GM18951 (cell line): ENCODE measurements at regions of chr11 and their contacts with region 1.

Region 1: DNA sequence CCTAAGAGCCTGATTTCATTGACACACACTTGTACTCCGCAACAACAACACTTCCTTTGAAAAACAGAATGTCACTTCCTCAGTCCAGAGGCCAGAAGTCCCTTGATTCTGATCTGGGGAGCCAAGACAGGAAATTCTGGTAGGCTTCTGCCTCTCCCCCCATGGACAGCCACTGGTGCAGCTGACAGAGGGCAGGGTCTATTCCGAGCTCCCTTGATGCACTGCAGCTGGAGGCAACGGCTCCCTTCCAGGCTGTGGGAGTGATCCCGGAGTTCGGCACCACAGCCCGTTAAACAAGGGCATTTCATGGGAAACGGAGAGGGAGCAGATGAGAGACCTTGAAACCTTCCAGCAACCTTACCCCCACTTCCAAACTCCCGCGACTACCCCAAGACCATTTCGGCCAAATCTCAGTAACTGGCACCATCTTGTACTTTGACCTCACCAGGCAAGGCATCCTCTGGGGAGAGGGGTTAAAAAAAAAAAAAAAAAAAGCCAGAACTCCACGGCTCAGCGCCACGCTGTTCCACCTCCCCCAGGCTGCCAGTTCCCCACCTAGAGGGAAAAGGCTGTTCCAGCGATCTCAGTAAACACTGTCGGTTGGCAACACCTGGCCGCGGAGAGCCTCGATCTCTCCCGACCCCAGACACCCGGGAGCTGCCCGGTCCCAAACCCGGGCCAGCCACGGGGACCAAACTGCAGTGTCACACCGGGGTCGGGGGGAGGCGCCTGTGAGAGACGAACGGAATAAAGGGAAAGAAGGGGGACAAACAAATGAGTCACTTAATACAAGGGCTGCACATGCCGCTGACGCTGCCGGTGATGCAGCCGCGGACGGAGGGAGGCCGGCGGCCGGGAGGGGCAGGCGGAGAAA is 1.1 kb downstream of the GAB2 start:
- POLR2A ChIP-seq: no peak

Region 2: DNA sequence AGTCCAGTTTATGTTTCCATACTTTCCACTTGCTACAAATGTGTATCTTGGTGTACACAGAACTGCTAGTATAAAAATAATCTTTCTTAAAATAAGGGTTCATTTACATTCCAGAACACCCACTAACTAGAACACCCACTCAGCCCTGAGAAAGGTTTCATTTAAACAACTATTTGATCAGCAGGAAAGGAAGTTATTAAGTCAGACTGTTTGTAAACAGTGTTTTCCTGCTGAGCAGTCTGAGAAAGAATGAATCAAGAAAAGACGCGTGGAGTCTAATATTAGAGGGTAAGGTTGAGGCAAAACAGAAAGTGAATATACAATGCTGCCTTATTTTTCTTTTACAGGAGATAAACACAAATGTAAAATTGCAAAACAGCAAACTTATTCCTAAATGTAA is 125.5 kb after region 1 on chr11:
- in situ Hi-C with region 1: loop called (anchors 10 kb)
- POLR2A ChIP-seq: no peak